PC-9 (cell line): ENCODE measurements at regions of chr3 and their contacts with region 1.

Region 1: DNA sequence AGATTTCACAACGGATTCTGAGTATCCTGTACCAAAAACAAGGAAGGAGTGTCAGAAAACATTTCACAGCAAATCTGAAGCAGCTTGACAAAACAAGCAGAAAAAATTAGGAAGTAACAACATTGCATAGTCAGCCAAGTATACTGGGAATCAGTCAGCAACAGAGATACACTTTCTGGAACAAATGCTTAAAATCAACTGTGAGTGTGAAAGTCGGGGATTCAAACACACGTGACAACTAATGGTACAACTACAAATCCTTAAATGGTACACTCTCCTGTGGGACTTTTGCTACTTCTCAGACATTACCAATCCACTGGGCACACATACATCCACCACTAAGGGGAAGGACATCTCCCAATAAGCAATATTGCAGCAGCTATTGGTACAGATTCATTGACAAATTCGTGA is 296.6 kb upstream of the MME start:
- DNase-seq: no peak
- H3K4me3 ChIP-seq: no peak overlapping the region
- H3K27ac ChIP-seq: no peak overlapping the region
- H3K4me1 ChIP-seq: no peaks in the 10 kb centered on the region
- H3K27me3 ChIP-seq: no peaks in the 10 kb centered on the region
- CTCF ChIP-seq: no peak

Region 2: DNA sequence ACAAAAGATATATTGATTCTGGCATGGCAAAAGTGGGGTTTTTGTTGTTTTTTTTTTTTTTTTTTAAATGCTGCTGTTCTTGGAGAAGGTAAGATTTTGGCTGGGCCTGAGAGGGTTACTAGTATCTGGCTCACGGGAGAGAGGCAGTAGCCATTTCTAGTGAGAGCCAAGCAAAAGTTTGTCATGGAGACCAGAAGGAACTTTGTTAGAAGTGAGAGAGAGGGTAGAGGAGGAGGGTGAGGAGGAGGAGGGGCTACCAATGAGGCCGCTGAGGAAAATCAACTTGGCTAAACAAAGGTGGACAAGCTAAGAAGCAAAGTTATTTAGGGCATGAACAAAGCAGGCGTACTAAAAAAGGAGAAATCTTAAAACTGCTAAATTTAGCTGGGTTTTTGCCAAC is 558.8 kb after region 1 on chr3:
- CTCF ChIA-PET with region 1: no interaction called
- POLR2A ChIA-PET with region 1: interaction called, 12 read pairs
- intact Hi-C with region 1: no loop called
- DNase-seq: no peak
- H3K4me3 ChIP-seq: no peak overlapping the region
- H3K27ac ChIP-seq: no peak overlapping the region
- H3K4me1 ChIP-seq: no peaks in the 10 kb centered on the region
- H3K27me3 ChIP-seq: no peaks in the 10 kb centered on the region
- CTCF ChIP-seq: no peak